ENCODE measurements at regions of chr14 and their contacts with region 1.

Region 1: DNA sequence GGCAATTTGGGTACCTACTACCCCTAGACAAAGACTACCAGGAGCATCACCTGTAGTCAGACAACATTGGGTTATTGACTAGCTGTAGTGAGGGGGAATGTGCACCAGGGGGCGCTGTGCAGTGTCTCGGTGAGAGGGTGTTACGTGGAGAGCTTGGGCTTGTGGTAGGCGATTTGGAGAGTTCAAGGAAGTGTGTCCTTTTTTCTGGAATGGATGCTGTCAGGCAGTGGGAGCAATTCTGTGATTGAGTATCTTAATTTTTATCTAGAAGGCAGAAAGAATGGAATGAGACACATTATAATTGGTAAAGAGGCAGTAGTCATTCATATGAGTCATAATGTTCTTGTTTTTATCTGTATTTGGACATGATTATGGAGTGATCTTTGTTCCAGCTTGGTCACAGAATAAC is 187.7 kb downstream of the GALC start:
- DNase-seq: peak; percentile 39
- CTCF ChIP-seq: peak; percentile 48

Region 2: DNA sequence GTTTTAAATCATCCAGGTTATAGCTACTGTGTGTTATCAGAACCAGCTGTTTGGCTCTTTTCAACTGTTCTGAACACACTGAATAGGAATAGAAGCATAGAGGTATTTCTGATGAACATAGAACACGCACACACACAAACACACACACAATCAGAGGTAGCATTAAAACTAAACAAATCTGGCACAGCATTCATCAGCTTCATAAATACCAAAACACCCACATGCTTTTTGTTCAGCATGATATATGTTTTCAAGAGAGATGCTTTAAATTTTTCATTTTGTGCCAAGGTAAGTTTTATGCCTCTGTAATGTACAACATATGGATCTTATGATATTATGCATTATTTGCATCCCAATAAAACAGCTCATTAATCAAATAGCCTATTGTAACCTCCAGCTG is 20.9 kb before region 1 on chr14:
- CTCF ChIA-PET with region 1: interaction called, 21 read pairs
- POLR2A ChIA-PET with region 1: no interaction called
- DNase-seq: no peak
- CTCF ChIP-seq: no peak

Region 3: GRCh38 chr14:87824266-87824665 is 18.9 kb after region 1 on chr14:
- CTCF ChIA-PET with region 1: interaction called, 21 read pairs
- POLR2A ChIA-PET with region 1: no interaction called
- DNase-seq: no peak
- CTCF ChIP-seq: no peak

Region 4: DNA sequence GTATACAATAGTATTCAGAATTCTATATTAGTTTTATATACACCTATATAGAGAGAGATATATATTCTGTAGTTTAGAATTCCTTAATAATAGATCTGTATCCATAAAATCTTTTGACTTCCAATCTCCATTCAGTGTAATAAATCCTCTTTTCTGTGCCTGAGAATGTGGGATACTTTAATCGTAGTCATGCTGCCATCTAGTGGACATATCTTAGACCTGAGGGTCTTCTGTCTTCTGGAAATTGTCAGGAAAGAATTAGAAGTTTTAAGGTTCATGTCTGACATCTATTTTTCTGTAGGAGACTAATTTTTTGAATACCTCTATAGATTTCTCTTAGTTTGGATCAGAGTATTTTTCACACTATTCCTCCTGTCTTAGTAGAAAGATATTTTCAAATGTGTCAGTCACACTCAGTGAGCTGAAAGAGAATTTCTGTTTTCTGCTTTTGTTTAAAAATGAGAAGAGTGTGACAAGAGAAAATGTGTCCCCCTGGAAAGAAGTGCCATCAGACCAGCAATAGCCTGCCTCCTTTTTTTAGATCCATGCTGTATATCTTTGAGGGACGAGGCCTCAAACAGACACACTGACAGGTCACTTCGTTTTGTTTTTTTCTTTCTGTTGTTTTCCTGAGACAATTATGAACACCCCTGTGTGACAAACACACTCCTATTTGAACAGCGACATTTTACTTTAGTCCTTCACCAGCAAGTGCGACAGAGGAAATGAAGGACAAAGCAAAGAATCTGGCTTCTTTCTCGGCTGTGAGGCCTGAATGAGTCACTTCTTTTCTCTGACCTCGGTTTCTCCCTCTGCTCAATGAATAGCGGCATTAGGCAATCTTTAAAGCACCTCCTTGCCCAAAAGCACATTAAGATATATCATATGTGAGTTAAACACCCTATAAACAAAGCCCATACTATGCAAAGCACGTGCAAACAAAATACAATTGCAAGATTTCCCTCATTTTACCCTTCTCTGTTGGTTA is 91.4 kb after region 1 on chr14:
- CTCF ChIA-PET with region 1: interaction called, 15 read pairs
- POLR2A ChIA-PET with region 1: no interaction called
- DNase-seq: peak; percentile 27
- CTCF ChIP-seq: peak; percentile 60

Measured in GM10248 (cell line).